Left lung (tissue), 14 donors: ENCODE measurements at regions of chr3 and their contacts with region 1.

Region 1: DNA sequence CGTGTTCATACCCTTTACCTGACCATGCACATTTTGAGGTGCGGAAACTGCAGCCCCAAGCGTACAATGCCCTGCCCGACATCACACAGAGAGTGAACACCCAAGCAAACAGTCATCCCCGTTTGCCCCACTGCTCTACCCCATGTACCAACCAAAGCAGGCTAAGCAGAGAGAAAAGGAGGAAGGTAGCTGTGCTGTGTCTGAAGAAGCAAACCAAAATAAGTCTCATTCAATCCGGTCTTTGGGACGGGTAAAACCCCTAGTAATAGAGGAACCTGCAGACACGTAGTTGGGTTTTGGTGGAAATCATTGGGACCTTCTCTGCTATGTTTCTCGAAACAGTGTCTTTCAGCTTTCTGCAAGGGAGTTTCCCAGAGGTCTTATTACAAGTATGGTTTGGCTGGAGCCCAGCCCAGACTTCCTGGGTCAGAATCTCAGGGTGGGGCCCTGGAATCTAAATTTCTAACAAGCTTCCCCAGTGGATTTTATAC is 164.6 kb upstream of the HES1 start:
- DNase-seq: peak in 1 of 4 donors; percentile 46
- ATAC-seq: peak; percentile 60
- H3K4me3 ChIP-seq: no peak overlapping the region
- H3K27ac ChIP-seq: peak overlapping the region in 1 of 2 donors; percentile 2
- H3K4me1 ChIP-seq: peaks cover 18 to 29% of the 10 kb centered on the region in 2 donors
- H3K27me3 ChIP-seq: peaks cover 0 to 9% of the 10 kb centered on the region in 2 donors
- CTCF ChIP-seq: no peak

Region 2: DNA sequence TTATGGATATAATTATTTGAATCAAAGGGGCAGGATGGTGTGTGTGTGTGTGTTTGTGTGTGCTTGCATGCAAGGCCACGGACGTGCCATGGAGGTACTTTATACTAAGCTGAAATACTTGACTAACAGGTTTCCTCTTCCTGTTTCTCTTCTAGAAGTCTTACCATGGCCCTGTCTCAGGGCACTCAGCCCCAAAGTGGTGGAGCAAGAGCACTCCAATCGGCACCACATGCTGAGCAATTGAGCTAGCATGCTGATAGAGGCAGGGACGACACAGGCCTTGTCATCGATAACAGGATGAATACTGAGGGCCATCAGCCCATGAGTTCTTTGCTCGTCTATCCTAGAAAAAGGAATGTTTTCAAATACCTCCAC is 179.6 kb before region 1 on chr3:
- intact Hi-C with region 1: loop called in 1 of 2 experiments (anchors 10 kb)
- DNase-seq: peak in 2 of 4 donors; percentile 76 to 86
- ATAC-seq: peak; percentile 84
- H3K4me3 ChIP-seq: no peak overlapping the region
- H3K27ac ChIP-seq: peak overlapping the region in 1 of 2 donors; percentile 20
- H3K4me1 ChIP-seq: peaks cover 11 to 17% of the 10 kb centered on the region in 2 donors
- H3K27me3 ChIP-seq: peaks cover 0 to 5% of the 10 kb centered on the region in 2 donors
- CTCF ChIP-seq: no peak

Region 3: DNA sequence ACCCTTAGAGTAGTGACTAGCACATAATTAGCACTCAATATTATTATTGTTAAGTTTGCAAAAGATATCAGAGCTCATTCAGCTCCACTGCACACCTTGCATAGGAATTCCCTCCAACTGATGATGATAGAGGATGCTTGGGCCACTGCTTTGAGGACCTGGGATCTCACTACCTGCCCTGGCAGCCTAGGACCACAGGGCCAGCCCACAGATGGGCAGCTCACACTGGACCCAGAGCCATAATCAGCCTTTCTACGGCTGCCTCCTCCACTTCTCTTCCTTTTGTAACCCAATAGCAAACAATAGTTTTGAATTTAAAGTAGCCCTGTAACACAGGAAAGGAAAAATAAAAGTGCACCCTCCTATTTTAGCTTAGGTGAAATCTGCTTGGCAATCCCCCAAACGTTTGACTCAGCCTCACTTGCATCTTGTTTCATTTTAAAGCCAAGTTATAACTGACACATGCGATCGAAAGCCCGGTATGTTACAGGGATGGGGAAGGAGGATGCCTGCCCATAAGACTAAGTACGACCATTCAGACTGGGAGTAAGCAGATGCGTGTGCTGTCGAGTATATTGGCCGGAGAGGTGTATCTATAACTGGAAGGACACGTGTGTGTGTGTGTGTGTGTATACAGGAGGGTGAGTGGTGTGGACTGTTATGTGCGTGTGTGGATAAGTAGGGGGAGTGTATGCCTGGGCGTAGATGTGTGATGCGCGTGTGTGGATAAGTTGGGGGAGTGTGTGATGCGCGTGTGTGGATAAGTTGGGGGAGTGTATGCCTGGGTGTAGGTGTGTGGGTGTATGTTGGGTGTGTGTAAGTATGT is 313.9 kb after region 1 on chr3:
- intact Hi-C with region 1: no loop called
- DNase-seq: no peak
- ATAC-seq: no peak
- H3K4me3 ChIP-seq: no peak overlapping the region
- H3K27ac ChIP-seq: no peak overlapping the region
- H3K4me1 ChIP-seq: peaks cover 0 to 6% of the 10 kb centered on the region in 2 donors
- H3K27me3 ChIP-seq: no peaks in the 10 kb centered on the region
- CTCF ChIP-seq: no peak